ENCODE measurements at regions of chr2 and their contacts with region 1.

Region 1: DNA sequence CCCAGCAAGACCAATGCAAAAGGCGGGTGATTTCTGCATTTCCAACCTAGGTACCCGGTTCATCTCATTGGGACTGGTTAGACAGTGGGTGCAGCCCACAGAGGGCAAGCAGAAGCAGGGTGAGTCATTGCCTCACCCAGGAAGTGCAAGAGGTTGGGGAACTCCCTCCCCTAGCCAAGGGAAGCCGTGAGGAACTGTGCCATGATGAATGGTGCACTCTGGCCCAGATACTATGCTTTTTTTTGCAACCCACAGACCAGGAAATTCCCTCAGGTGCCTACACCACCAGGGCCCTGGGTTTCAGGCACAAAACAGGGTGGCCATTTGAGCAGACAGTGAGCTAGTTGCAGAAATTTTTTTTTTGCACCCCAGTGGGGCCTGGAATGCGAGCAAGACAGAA is 662.6 kb upstream of the ACVR2A start:
- DNase-seq: peak; percentile 82
- H3K4me3 Mint-ChIP-seq: no peak overlapping the region
- H3K27ac Mint-ChIP-seq: peak overlapping the region; percentile 77
- H3K4me1 Mint-ChIP-seq: peaks cover 29% of the 10 kb centered on the region
- H3K27me3 Mint-ChIP-seq: no peaks in the 10 kb centered on the region

Region 2: DNA sequence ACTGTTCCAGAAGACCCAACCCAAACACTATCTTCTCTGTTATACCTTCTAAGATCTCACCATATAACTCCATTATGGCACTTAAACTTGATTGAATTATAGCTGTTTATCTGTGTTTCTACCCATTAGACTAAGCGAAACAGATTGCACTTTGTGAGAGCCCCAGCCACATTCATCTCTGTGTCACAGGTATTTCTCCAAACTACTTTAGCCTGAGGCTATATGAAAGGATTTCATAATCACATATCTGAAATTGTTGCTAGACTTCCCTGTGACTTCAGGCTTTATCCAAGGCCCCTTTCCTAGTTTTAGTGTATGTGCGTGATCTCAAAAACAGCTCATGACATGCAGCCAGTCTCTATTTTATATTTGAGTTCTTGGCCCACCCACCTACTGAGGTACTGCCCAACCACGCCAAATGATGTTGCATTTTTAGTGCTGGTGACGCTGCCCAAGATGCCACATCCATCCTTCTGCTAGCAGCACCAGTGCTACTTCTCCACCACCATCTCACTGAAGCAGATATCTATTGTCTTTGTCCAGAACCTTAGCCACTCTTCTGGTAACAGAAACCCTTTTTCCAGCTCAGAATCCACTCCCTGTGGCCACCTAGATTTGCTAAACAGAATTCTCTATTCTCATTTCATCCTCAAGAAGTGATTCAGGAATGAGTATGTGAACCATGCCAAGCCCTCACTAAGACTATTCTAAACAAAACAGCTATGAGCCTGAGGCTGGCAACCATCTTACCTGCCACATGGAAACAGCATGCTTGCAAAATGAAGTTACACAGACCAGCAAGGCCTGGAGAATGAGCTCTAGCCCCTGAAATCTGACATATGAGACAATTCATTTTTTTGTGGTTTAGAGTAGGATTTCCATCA is 82.2 kb before region 1 on chr2:
- CTCF ChIA-PET with region 1: no interaction called
- POLR2A ChIA-PET with region 1: no interaction called
- intact Hi-C with region 1: loop called (anchors 5 kb)
- DNase-seq: no peak
- H3K4me3 Mint-ChIP-seq: no peak overlapping the region
- H3K27ac Mint-ChIP-seq: no peak overlapping the region
- H3K4me1 Mint-ChIP-seq: peaks cover 11% of the 10 kb centered on the region
- H3K27me3 Mint-ChIP-seq: no peaks in the 10 kb centered on the region

Region 3: GRCh38 chr2:147211484-147211883 is 29.2 kb after region 1 on chr2:
- CTCF ChIA-PET with region 1: no interaction called
- POLR2A ChIA-PET with region 1: no interaction called
- intact Hi-C with region 1: no loop called
- DNase-seq: no peak
- H3K4me3 Mint-ChIP-seq: no peak overlapping the region
- H3K27ac Mint-ChIP-seq: no peak overlapping the region
- H3K4me1 Mint-ChIP-seq: no peaks in the 10 kb centered on the region
- H3K27me3 Mint-ChIP-seq: no peaks in the 10 kb centered on the region

Region 4: DNA sequence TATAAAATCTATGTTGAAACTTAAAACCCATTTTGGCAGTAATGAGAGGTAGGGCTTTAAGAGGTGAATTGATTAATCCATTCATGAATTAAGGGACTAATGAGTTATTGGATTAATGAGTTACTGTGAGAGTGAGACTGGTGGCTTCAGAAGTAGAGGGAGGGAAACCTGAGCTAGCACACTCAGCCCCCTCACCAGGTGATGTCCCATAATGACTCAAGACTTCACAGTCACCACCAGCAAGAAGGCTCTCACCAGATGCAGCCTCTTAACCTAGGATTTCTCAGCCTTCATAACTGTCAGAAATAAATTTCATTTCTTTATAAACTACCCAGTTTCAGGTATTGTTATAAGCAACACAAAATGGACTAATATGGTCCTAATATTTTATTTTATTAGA is 40.9 kb after region 1 on chr2:
- CTCF ChIA-PET with region 1: no interaction called
- POLR2A ChIA-PET with region 1: no interaction called
- intact Hi-C with region 1: loop called (anchors 2 kb)
- DNase-seq: peak; percentile 23
- H3K4me3 Mint-ChIP-seq: no peak overlapping the region
- H3K27ac Mint-ChIP-seq: no peak overlapping the region
- H3K4me1 Mint-ChIP-seq: no peaks in the 10 kb centered on the region
- H3K27me3 Mint-ChIP-seq: no peaks in the 10 kb centered on the region

Region 5: DNA sequence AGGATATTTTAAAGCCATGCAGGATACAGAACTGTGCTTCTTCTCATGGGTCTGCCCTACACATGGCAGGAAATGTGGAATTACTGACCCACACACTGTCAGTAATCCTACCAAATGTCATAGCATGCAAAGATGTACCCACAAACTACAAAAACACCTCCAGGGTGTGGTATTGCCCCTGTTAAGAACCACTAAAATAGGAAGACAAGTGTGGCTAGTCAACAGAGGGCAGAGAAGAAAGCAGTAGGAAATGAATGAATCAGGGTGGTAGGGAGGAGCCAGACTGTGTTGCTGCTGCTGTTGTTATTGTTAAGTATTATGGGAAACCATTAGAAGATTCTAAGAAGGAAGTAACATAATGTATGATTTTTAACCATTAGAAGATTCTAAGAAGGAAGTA is 105.9 kb after region 1 on chr2:
- CTCF ChIA-PET with region 1: no interaction called
- POLR2A ChIA-PET with region 1: no interaction called
- intact Hi-C with region 1: loop called (anchors 2 kb)
- DNase-seq: peak; percentile 41
- H3K4me3 Mint-ChIP-seq: no peak overlapping the region
- H3K27ac Mint-ChIP-seq: peak overlapping the region; percentile 59
- H3K4me1 Mint-ChIP-seq: peaks cover 45% of the 10 kb centered on the region
- H3K27me3 Mint-ChIP-seq: no peaks in the 10 kb centered on the region

Region 6: DNA sequence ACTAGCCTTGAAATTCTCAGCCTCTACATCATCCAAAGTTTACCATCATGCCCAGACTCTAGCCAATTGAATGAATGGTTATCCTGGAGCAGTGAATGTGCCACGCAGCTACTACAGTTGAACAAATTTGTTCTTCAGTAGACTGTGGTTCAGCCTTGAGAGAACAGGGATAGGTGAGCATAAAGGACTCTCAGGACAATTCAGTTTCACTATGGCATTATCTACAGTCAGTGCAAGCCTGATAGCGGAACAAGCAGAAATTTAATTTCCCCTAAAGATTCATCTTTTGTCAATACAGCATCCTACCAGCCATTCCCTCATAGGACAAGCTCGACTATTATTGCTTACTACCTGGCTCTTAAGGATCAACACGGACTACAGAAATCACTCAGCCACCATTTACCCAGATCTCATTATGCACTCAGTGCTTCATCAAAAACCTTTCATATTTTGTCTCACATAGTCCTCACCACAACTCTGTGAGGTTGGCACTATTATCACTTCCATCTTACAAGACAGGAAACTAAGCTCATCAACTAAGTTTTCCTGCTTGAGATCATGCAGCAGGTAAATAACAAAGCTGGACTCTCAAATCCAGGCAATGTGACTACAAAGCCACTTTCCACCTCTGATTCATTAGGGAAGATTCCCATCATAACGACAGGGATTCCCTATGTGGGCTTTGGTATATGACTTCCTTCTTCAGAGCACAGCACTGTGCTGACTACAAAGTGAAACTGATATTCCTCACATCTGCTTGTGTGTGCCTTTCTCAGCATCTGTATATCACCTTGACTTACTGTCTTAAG is 481.1 kb after region 1 on chr2:
- CTCF ChIA-PET with region 1: no interaction called
- POLR2A ChIA-PET with region 1: no interaction called
- intact Hi-C with region 1: loop called (anchors 1 kb)
- DNase-seq: peak; percentile 10
- H3K4me3 Mint-ChIP-seq: peak overlapping the region; percentile 51
- H3K27ac Mint-ChIP-seq: peak overlapping the region; percentile 82
- H3K4me1 Mint-ChIP-seq: peaks cover 24% of the 10 kb centered on the region
- H3K27me3 Mint-ChIP-seq: no peaks in the 10 kb centered on the region

Measured in activated CD4-positive, alpha-beta memory T cell treated with anti-CD3 and anti-CD28 coated beads for 36 hours (primary cell).